ENCODE measurements at regions of chr7 and their contacts with region 1.

Region 1: DNA sequence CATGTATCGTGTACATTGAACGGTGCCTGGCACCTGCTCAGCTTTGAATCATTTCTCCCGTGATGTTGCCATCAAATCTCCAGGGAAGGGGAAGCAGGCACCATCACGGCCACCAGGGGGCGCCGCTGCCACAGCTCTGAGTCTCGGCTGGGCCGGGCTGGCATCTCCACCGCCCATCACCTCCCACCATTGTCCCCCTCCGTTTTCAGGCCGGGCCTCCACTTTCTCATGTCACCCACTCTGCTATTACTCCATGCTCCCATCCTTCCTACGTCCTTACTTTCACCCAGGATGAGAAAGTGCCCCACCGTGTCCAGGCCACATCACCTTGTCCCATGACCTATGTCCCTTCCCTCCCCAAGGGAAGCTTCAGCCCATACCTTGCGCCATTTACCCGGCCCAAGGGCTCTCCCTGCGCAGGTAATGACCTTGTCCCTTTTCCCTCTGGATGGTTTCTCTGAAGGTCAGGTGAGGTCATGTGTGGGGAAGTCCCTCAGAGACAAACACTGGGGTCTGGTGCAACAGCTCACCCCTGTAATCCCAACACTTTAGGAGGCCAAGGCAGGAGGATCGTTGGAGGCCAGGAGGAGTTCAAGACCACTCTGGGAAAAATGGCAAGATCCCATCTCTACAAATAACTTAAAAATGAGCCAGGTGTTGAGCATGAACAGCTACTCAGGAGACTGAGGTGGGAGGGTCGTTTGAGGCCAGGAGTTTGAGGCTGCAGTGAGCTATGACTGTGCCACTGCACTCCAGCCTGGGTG is 31.8 kb upstream of the OCM2 start:
- DNase-seq: peak; percentile 76 to 84
- ATAC-seq: peak; percentile 77 to 95 (median 89)
- H3K4me3 ChIP-seq: no peak overlapping the region
- H3K4me3 Mint-ChIP-seq: no peak overlapping the region
- H3K27ac ChIP-seq: no peak overlapping the region
- H3K27ac Mint-ChIP-seq: no peak overlapping the region
- H3K4me1 ChIP-seq: peaks cover 6% of the 10 kb centered on the region
- H3K4me1 Mint-ChIP-seq: peaks cover 0 to 4% of the 10 kb centered on the region in 2 donors
- H3K27me3 ChIP-seq: no peaks in the 10 kb centered on the region
- H3K27me3 Mint-ChIP-seq: peaks cover 0 to 3% of the 10 kb centered on the region in 2 donors
- CTCF ChIP-seq: peak; percentile 92

Region 2: GRCh38 chr7:98066934-98067507 is 45.3 kb after region 1 on chr7:
- intact Hi-C with region 1: no loop called
- DNase-seq: no peak
- ATAC-seq: no peak
- H3K4me3 ChIP-seq: no peak overlapping the region
- H3K4me3 Mint-ChIP-seq: no peak overlapping the region
- H3K27ac ChIP-seq: no peak overlapping the region
- H3K27ac Mint-ChIP-seq: no peak overlapping the region
- H3K4me1 ChIP-seq: no peaks in the 10 kb centered on the region
- H3K4me1 Mint-ChIP-seq: no peaks in the 10 kb centered on the region
- H3K27me3 ChIP-seq: no peaks in the 10 kb centered on the region
- H3K27me3 Mint-ChIP-seq: peaks cover 0 to 8% of the 10 kb centered on the region in 2 donors
- CTCF ChIP-seq: no peak

Region 3: DNA sequence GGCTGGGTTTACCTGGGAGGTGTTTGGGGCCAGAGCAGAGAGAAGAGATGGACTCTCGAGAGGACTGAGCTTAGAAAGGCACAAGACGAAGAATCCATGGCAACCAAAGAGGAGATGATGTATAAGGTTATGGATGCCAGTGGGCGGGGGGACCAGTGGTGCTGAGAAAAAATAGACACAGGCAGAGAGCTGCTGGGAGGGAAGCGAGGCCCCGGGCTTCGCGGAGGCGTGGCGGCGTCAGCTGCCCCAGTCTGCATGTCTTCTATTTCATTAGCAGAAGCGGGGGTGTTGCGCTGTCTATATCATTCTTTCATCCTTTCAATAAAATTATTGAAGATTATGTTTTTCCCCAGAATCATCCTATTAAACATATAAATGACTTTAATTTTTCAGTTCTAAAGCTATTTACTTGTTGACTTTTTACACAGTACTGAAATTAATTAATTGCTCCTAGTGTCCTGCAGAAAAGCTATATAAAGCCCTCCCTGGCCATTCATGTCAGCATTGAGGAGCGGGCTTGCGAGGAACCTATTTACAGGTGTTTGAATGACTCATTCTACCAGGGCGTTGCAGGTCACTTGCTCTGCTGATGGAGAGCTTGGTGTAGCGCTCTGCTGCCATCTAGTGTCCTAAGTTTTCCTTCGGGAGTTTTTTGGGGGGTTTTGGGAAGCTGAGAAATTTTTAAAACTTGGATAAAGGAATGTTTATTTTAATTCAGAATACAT is 146.6 kb after region 1 on chr7:
- intact Hi-C with region 1: loop called (anchors 1 kb)
- DNase-seq: peak; percentile 42 to 87
- ATAC-seq: peak; percentile 75 to 87 (median 80)
- H3K4me3 ChIP-seq: no peak overlapping the region
- H3K4me3 Mint-ChIP-seq: no peak overlapping the region
- H3K27ac ChIP-seq: no peak overlapping the region
- H3K27ac Mint-ChIP-seq: peak overlapping the region; percentile 24 to 70
- H3K4me1 ChIP-seq: no peaks in the 10 kb centered on the region
- H3K4me1 Mint-ChIP-seq: peaks cover 5 to 10% of the 10 kb centered on the region in 2 donors
- H3K27me3 ChIP-seq: no peaks in the 10 kb centered on the region
- H3K27me3 Mint-ChIP-seq: no peaks in the 10 kb centered on the region
- CTCF ChIP-seq: peak; percentile 95

Region 4: DNA sequence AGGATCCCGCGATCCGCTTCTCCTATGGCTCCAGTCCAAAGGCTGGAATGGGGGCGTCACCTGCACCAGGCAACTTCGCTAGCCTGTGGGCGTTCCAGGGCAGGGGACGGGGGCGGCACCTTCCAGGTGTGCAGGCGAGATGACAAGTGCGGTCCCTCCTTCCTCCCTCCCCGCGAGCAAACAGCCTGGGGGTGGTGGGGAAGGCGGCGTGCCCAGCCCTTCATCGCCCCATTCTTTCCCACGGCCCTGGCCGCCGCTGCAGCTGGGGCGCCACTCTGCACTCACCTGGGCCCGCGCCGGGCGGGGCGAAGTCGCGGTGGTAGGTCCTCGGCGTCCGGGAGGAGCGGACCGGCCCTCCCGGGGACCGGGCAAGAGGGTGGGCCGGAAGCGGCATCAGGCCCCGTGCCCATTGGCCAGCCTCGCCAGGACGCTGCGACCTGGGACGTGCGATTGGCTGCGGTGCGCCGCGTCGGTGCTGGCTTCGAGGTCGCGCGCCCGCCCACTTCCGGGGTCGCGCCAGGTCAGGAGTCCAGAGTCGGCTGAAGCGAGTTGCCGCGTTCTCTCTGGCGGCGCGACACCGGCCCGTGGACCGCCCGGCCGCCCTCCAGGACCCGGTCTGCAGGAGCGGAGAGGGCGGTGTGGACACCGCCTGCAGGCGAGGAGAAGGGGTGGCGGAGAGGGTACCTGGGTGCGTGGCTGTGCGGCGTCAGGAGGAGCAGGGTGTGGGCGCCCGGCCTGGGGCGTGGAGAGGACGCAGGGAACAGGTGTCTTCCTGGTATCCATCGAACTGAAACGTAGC is 230.3 kb after region 1 on chr7 and contains the start of gene TECPR1:
- intact Hi-C with region 1: no loop called
- DNase-seq: peak; percentile 93 to 94
- ATAC-seq: peak; percentile 91 to 98 (median 96)
- H3K4me3 ChIP-seq: peak within 1 kb of the TSS; percentile 83
- H3K4me3 Mint-ChIP-seq: peak within 1 kb of the TSS; percentile 94
- H3K27ac ChIP-seq: peak within 1 kb of the TSS; percentile 71
- H3K27ac Mint-ChIP-seq: peak within 1 kb of the TSS; percentile 86 to 99
- H3K4me1 ChIP-seq: peaks cover 42% of the 10 kb centered on the region
- H3K4me1 Mint-ChIP-seq: peaks cover 59 to 62% of the 10 kb centered on the region in 2 donors
- H3K27me3 ChIP-seq: no peaks in the 10 kb centered on the region
- H3K27me3 Mint-ChIP-seq: no peaks in the 10 kb centered on the region
- CTCF ChIP-seq: no peak
- total RNA-seq, gene TECPR1: 68.8 to 76.7 (median 70.3) TPM